Endothelial cell of umbilical vein (primary cell): ENCODE measurements at regions of chr2 and their contacts with region 1.

Region 1: GRCh38 chr2:108364676-108365297 is 13.0 kb upstream of the SULT1C4 start:
- DNase-seq: no peak
- H3K4me3 ChIP-seq: no peak overlapping the region
- H3K27ac ChIP-seq: no peak overlapping the region
- H3K4me1 ChIP-seq: peaks cover 18% of the 10 kb centered on the region
- H3K27me3 ChIP-seq: peaks cover 0 to 2% of the 10 kb centered on the region in 2 experiments
- CTCF ChIP-seq: no peak
- POLR2A ChIP-seq: no peak

Region 2: DNA sequence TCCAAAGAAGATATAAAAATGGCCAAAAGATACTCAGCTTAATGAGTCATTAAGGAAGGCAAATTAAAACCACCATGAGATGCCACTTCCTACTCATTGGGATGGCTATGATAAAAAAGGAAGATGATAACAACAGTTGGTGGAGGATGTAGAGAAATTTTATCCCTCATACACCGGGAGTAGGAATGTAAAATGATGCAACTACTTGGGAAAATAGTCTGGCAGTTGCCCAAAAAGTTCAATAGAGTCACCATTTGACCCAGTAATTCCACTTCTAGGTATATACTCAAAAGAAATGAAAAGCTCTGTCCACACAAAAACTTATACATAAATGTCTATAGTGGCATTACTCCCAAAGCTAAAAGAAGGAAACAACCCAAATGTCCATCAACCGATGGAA is 86.2 kb before region 1 on chr2:
- CTCF ChIA-PET with region 1: no interaction called
- POLR2A ChIA-PET with region 1: no interaction called
- dilution Hi-C with region 1: no loop called
- intact Hi-C with region 1: no loop called
- DNase-seq: no peak
- H3K4me3 ChIP-seq: no peak overlapping the region
- H3K27ac ChIP-seq: no peak overlapping the region
- H3K4me1 ChIP-seq: no peaks in the 10 kb centered on the region
- H3K27me3 ChIP-seq: no peaks in the 10 kb centered on the region
- CTCF ChIP-seq: no peak
- POLR2A ChIP-seq: no peak

Region 3: DNA sequence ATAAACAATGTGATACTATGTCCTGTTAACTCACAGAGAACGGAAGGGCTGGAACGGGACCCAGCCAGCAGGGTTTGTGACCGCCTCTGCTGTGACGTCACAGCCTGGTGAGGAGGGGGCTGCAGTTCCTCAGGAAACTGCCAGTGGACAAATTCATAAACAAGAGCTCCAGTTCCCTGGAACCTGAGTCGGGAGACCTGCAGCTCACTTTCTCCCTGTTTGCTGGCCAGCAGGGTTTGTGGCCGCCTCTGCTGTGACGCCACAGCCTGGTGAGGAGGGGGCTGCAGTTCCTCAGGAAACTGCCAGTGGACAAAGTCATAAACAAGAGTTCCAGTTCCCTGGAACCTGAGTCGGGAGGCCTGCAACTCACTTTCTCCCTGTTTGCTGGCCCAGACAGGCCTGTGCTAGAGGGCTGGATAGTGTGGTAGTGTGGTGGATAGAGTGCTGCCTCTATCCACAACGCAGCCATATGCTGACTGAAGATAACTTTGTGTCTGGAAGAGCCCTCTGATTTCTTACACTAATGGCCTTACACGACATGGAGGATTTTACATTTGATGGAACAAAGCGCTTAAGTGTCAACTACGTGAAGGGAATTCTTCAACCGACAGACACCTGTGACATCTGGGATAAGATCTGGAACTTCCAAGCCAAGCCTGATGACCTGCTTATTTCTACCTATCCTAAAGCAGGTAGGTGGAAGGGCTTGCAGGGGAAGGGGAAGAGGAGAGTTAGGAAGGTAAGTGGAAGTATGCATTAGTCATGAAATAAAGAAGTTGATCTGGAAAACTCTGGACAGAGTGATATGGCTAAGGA is 13.2 kb after region 1 on chr2 and contains the start of gene SULT1C4:
- CTCF ChIA-PET with region 1: interaction called, 3 read pairs
- POLR2A ChIA-PET with region 1: interaction called, 4 read pairs
- dilution Hi-C with region 1: no loop called
- intact Hi-C with region 1: loop called (anchors 1 kb)
- DNase-seq: peak; percentile 95
- H3K4me3 ChIP-seq: peak within 1 kb of the TSS in 2 of 3 experiments; percentile 40 to 41
- H3K27ac ChIP-seq: peak within 1 kb of the TSS; percentile 72
- H3K4me1 ChIP-seq: peaks cover 13% of the 10 kb centered on the region
- H3K27me3 ChIP-seq: peaks cover 0 to 3% of the 10 kb centered on the region in 2 experiments
- CTCF ChIP-seq: no peak
- POLR2A ChIP-seq: peak; percentile 52
- total RNA-seq, gene SULT1C4: 28.2 and 29.3 TPM in 2 replicates

Region 4: DNA sequence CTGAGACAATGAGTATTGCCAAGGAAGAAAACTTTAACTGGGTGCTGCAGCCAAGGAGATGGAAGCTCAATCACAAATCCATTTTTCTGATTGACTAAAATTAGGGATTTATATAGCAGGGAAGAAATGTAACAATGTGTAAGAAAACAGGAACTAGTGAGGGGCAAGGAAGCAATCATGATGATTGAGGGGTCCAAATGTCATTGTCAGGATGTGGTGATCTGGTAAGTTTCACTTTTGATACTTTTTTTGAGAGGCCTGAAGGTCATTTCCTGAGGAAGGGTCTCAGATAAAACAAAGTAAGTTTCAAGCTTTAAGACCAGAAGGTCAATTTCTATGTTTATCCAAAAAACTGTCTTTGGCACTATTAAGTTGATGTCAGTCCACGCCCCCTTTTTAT is 72.2 kb after region 1 on chr2:
- CTCF ChIA-PET with region 1: no interaction called
- POLR2A ChIA-PET with region 1: no interaction called
- dilution Hi-C with region 1: no loop called
- intact Hi-C with region 1: loop called (anchors 1 kb)
- DNase-seq: no peak
- H3K4me3 ChIP-seq: no peak overlapping the region
- H3K27ac ChIP-seq: no peak overlapping the region
- H3K4me1 ChIP-seq: no peaks in the 10 kb centered on the region
- H3K27me3 ChIP-seq: no peaks in the 10 kb centered on the region
- CTCF ChIP-seq: no peak
- POLR2A ChIP-seq: no peak

Region 5: GRCh38 chr2:108448678-108449493 is 84.1 kb after region 1 on chr2 and contains the start of gene GCC2:
- CTCF ChIA-PET with region 1: no interaction called
- POLR2A ChIA-PET with region 1: no interaction called
- dilution Hi-C with region 1: no loop called
- intact Hi-C with region 1: loop called (anchors 2 kb)
- DNase-seq: peak; percentile 95
- H3K4me3 ChIP-seq: peak within 1 kb of the TSS; percentile 83 to 93 (median 90)
- H3K27ac ChIP-seq: peak within 1 kb of the TSS; percentile 86
- H3K4me1 ChIP-seq: peaks cover 15% of the 10 kb centered on the region
- H3K27me3 ChIP-seq: no peaks in the 10 kb centered on the region
- CTCF ChIP-seq: no peak
- POLR2A ChIP-seq: peak; percentile 83
- total RNA-seq, gene GCC2: 33.7 and 38.7 TPM in 2 replicates

Region 6: DNA sequence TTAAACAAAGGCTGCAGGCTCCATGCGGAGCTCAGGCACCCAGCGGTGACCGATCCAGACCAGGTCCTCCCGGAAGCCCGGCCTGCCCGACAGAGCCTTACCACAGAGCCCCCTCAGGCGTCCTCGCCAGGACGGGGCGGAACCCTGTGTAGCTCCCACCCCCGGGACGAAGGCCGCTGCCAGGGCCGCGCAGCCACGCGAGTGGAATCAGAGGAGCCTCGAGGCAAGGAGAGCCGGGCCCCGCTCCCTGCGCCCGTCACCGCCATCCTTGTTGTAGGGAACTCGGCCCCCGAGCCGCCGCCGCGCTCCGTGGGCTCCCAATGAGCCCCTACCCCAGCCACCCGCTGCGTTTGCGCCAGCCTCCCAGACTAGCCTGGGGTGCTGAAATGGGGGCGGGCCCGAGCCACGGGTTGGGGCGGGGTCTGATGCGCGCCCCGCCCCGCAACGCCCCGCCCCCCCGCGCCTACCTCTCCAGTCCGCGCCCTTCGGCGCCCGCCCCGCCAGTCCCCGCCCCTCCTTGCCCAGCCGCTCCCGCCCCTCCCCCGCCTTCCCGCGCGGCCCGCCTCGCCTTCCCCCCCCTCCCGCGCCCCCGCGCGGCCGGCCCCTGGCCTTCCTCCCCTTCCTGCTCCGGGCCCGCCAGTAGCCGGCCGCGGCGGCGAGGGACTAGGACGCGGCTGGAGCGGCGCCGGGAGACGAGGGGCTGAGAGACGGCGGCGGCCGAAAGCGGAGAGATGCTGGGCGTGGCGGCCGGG is 169.2 kb after region 1 on chr2 and contains the start of gene LIMS1:
- CTCF ChIA-PET with region 1: no interaction called
- POLR2A ChIA-PET with region 1: no interaction called
- dilution Hi-C with region 1: no loop called
- intact Hi-C with region 1: loop called (anchors 5 kb)
- DNase-seq: peak; percentile 90
- H3K4me3 ChIP-seq: peak within 1 kb of the TSS; percentile 65 to 84 (median 74)
- H3K27ac ChIP-seq: peak within 1 kb of the TSS; percentile 86
- H3K4me1 ChIP-seq: peaks cover 15% of the 10 kb centered on the region
- H3K27me3 ChIP-seq: no peaks in the 10 kb centered on the region
- CTCF ChIP-seq: no peak
- POLR2A ChIP-seq: peak; percentile 83
- total RNA-seq, gene LIMS1: 153 and 166 TPM in 2 replicates

Region 7: DNA sequence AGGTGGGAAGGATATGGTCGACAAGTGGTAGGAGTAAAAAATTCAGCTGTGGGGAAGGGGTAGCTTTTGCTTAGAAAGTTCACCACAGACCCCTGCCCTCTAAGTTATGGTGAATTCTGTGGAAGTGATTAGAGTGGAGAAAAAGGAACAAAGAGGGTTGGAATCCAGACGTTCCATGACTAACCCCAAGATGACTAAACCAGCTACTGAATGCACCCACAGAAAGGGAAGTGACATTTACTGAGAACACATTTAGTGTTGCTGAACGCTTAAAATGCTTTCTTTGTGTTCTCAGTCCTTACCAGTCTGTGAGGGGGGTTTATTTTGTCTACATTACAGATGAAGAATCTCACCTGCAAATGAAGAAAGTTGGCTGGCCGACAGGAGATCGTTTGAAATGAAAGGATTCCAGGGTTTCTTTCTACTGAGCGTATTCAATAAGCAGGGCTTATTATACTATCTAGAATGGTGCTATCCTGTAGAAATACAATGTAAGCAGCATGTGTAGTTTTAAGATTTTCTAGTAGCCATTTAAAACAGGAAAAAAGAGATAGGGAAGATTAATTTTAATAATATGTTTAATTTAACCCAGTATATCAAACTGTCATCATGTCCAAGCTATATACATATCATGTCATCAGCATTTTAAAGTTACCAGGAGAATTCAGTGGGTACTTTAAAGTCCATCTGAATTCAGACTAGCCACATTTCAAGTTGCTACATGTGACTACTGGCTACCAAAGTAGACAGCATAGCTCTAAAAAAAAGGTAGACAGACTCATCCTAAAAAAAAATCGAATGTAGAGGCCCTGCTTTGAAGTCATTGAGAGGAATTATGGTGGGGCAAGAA is 229.6 kb after region 1 on chr2:
- CTCF ChIA-PET with region 1: no interaction called
- POLR2A ChIA-PET with region 1: no interaction called
- dilution Hi-C with region 1: no loop called
- intact Hi-C with region 1: loop called (anchors 2 kb)
- DNase-seq: peak; percentile 91
- H3K4me3 ChIP-seq: peak overlapping the region in 1 of 3 experiments; percentile 48
- H3K27ac ChIP-seq: peak overlapping the region; percentile 99
- H3K4me1 ChIP-seq: peaks cover 59% of the 10 kb centered on the region
- H3K27me3 ChIP-seq: no peaks in the 10 kb centered on the region
- CTCF ChIP-seq: no peak
- POLR2A ChIP-seq: peak; percentile 79